ENCODE measurements at regions of chr11 and their contacts with region 1.

Region 1: GRCh38 chr11:119323538-119324033 is 6.7 kb upstream of the MCAM start:
- DNase-seq: peak; percentile 75 to 90
- ATAC-seq: no peak
- H3K4me3 ChIP-seq: no peak overlapping the region
- H3K27ac ChIP-seq: no peak overlapping the region
- H3K4me1 ChIP-seq: no peaks in the 10 kb centered on the region
- H3K27me3 ChIP-seq: no peaks in the 10 kb centered on the region

Region 2: DNA sequence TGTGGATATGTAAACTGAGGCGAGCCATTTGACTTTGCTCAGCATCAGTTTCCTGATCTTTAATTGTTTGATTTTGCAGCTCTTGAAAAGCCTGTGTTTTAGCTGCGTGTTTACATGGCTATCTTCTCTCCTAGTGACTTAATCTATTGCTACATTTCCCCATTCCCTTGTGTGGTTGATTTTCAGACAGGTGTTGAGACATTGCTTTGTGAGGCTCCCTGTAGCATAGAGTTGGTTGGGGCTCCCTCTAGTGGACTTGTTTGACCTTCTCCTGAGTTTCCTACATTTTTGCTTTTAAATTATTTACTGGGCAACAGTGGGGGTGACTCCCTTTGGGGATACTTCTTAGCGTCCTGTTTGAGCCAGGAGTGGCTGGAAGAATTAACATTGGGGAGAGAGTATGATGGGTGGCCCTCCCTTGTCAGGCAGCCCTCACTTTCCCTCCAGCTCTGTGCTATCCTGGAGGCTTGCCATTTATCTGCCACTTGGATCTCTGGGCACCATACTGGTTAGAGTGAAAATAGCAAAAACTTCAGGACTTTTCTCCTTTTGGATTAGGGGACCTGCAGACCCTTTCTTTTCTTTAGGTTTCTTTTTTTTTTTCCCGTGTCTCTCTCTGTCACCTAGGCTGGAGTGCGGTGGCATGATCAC is 126.6 kb before region 1 on chr11:
- intact Hi-C with region 1: loop called in 1 of 2 experiments (anchors 5 kb)
- DNase-seq: no peak
- ATAC-seq: peak; percentile 85
- H3K4me3 ChIP-seq: no peak overlapping the region
- H3K27ac ChIP-seq: no peak overlapping the region
- H3K4me1 ChIP-seq: no peaks in the 10 kb centered on the region
- H3K27me3 ChIP-seq: no peaks in the 10 kb centered on the region

Region 3: DNA sequence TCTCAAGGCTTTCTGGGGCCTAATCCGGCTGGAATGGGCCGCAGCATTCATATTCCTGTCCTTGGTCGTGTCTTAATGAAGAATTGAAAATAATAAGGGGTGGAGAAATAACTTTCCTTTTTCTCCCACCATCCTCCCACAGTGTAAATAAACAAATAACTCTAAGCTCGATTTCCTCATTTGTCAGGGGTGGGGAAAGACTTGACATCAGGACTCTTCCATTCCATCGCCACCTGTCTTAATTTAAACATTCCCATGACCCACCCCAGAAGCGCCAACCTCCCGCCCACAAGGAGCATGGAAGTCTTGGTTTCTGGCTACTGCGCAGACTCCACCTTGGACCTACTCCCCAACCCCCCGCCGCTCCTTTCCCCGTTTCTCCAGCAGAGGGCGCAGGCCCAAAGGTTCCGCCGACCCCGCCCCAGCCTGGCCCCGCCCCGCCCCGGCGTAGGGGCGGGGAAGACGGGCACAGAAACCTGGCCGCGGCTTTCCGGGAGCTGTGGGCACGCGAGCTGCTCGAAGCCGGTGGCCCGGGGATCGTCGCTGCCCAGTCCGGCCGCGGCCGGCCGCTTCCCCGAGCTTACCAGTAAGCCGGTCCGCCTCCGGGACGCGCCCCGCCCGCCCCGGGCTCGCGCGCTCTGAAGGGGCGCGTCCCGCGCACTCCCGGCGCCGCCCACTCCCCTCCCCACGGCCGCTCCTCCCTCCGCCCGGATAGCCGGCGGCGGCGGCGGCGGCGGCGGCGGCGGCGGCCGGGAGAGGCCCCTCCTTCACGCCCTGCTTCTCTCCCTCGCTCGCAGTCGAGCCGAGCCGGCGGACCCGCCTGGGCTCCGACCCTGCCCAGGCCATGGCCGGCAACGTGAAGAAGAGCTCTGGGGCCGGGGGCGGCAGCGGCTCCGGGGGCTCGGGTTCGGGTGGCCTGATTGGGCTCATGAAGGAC is 117.7 kb before region 1 on chr11 and contains the start of gene CBL:
- intact Hi-C with region 1: loop called in 1 of 2 experiments (anchors 5 kb)
- DNase-seq: peak; percentile 97 to 99
- ATAC-seq: peak; percentile 98
- H3K4me3 ChIP-seq: peak within 1 kb of the TSS; percentile 85 to 99
- H3K27ac ChIP-seq: peak within 1 kb of the TSS; percentile 32 to 91
- H3K4me1 ChIP-seq: peaks cover 0 to 2% of the 10 kb centered on the region in 2 donors
- H3K27me3 ChIP-seq: no peaks in the 10 kb centered on the region
- total RNA-seq, gene CBL: 33.0 to 37.4 TPM

Region 4: DNA sequence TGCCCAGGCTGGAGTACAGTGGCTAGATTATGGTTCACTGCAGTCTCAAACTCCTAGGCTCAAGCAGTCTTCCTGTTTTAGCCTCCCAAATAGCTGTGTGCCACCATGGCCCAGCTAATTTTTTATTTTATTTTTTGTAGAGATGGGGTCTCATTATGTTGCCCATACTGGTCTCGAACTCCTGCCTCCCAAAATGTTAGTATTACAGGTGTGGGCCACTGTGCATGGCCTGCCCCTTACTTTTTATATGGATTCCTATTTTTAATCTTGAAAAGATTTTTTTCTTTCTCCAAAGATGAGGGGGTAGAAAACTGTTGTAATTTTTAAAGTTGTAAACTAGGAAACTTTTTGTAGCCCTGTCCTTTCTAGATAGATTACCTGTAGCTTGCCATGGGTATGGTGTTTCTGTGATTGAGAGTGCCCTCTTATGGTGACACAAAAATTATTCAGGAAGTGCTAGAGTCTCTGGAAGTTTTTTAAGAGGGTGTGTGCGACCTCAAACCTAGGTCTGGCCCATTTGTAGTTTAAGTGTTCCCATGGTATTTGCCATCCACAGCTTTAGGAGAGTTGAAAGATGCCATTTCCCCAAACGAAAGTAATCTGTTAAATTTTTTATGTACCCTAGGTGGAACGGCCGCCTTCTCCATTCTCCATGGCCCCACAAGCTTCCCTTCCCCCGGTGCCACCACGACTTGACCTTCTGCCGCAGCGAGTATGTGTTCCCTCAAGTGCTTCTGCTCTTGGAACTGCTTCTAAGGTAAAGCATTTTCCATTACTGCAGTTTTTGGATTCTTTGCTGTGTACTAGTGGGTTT is 39.0 kb before region 1 on chr11:
- intact Hi-C with region 1: loop called in 1 of 2 experiments (anchors 2 kb)
- DNase-seq: no peak
- ATAC-seq: peak; percentile 71
- H3K4me3 ChIP-seq: no peak overlapping the region
- H3K27ac ChIP-seq: no peak overlapping the region
- H3K4me1 ChIP-seq: no peaks in the 10 kb centered on the region
- H3K27me3 ChIP-seq: no peaks in the 10 kb centered on the region

Region 5: DNA sequence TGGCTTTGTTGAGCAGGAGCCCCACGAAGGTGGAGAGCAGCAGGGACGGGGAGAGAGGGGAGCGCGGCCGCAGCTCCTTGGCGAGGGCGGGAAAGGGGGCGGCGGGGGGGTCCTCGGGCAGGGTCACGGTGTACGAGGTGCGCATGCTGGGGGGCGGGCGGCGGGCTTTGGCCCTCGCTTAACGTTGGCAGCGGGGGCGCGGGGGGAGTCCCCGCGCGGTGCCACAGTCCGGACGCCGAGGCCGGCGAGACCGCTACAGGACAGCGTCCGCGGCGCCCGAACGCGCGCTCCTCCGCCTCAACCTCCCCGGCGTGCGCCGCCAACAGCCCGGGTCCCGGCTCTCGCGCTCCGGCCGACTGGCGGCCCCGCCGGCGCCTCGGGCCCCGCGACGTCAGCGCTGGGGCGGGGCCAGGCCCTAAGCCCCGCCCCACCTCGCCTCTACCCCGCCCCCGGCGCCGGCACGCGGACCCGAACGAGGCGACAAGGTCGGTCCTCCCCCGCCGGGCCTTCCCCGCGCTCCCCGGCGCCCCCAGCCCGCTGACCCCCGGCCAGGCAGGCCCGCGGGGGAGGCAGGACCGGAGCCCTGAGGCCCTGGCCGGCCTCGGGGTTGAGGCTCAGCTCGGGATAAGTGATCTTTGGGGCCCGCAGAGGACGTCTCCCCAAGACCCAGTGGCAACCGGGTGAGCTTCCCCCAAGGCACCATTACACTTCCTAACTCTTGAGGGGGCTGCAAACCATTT is 40.4 kb after region 1 on chr11:
- intact Hi-C with region 1: no loop called
- DNase-seq: peak in 1 of 2 donors; percentile 89
- ATAC-seq: peak; percentile 71
- H3K4me3 ChIP-seq: peak overlapping the region in 1 of 2 donors; percentile 28
- H3K27ac ChIP-seq: no peak overlapping the region
- H3K4me1 ChIP-seq: no peaks in the 10 kb centered on the region
- H3K27me3 ChIP-seq: no peaks in the 10 kb centered on the region

Region 6: DNA sequence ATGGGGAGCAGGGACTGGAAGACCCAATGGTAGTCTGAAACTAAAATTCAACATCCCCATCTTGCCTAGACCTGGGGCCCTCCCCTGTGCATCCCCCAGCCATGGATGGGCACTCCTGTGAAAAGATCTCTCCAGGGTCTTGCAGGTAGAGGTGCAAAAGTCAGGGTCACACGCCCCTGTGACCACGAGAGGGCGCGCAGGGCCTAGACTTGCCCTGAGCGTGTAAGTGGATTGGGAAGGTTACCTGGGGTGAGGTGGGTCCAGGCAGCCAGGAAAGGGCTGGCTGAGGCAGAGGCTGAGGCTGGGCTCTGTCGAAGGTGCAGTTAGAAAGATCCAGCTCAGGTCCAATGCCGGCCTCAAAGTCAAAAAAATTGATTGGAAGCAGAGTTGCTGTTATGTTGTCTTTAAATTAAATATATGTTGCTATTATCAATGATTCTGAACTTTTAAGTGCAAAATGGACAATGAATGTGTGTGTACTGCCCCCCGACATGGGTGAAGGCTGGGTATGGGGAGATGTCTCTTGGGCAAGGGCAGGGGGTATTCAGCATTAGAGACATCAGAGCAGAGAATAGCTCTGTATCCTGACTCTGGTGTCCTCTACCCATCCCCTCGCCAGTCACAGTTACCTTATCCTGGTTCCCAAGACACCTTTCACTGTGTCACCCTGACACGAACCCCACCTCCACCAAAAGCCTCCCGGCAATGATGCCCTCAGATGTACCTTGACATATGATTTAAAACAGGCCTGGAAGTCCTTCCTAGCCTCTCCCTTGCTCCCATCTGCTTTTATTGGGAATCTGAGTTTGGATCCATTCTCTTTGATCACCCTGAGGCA is 911.7 kb after region 1 on chr11:
- intact Hi-C with region 1: no loop called
- DNase-seq: peak; percentile 65 to 84
- ATAC-seq: no peak
- H3K4me3 ChIP-seq: no peak overlapping the region
- H3K27ac ChIP-seq: no peak overlapping the region
- H3K4me1 ChIP-seq: no peaks in the 10 kb centered on the region
- H3K27me3 ChIP-seq: no peaks in the 10 kb centered on the region